Activated CD4-positive, alpha-beta T cell treated with anti-CD3 and anti-CD28 coated beads for 36 hours (primary cell): ENCODE measurements at regions of chr11 and their contacts with region 1.

Region 1: GRCh38 chr11:48055292-48056132 is 75.2 kb downstream of the PTPRJ start:
- DNase-seq: peak; percentile 80
- ATAC-seq: peak; percentile 93
- H3K4me3 Mint-ChIP-seq: peak overlapping the region; percentile 55
- H3K27ac Mint-ChIP-seq: peak overlapping the region; percentile 89
- H3K4me1 Mint-ChIP-seq: peaks cover 84% of the 10 kb centered on the region
- H3K27me3 Mint-ChIP-seq: no peaks in the 10 kb centered on the region

Region 2: GRCh38 chr11:47980245-47981049 is 75.1 kb before region 1 on chr11 and contains the start of gene PTPRJ:
- CTCF ChIA-PET with region 1: interaction called, 3 read pairs
- POLR2A ChIA-PET with region 1: interaction called, 5 read pairs
- intact Hi-C with region 1: loop called (anchors 1 to 2 kb)
- DNase-seq: peak; percentile 73
- ATAC-seq: peak; percentile 59
- H3K4me3 Mint-ChIP-seq: peak within 1 kb of the TSS; percentile 93
- H3K27ac Mint-ChIP-seq: peak within 1 kb of the TSS; percentile 20
- H3K4me1 Mint-ChIP-seq: peaks cover 30% of the 10 kb centered on the region
- H3K27me3 Mint-ChIP-seq: peaks cover 5% of the 10 kb centered on the region
- total RNA-seq, gene PTPRJ: 20.8 to 21.3 TPM

Region 3: DNA sequence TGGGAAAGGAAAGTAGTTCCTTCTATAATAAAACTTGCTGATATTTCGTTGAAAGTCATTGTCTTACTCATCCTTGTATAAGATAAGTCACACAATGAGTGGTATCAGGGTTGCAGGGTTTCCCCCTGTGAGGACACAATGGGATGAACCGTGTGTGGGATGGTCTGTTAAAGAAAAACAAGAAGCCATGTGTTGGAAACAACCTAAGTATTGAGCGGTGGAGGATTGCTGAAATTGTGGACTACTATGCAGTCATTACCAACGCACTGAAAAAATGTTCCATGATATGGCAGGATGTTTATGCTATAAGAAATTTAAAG is 46.6 kb before region 1 on chr11:
- CTCF ChIA-PET with region 1: interaction called, 9 read pairs
- POLR2A ChIA-PET with region 1: interaction called, 14 read pairs
- intact Hi-C with region 1: loop called (anchors 1 kb)
- DNase-seq: peak; percentile 87
- ATAC-seq: peak; percentile 48
- H3K4me3 Mint-ChIP-seq: peak overlapping the region; percentile 37
- H3K27ac Mint-ChIP-seq: peak overlapping the region; percentile 82
- H3K4me1 Mint-ChIP-seq: peaks cover 91% of the 10 kb centered on the region
- H3K27me3 Mint-ChIP-seq: no peaks in the 10 kb centered on the region

Region 4: DNA sequence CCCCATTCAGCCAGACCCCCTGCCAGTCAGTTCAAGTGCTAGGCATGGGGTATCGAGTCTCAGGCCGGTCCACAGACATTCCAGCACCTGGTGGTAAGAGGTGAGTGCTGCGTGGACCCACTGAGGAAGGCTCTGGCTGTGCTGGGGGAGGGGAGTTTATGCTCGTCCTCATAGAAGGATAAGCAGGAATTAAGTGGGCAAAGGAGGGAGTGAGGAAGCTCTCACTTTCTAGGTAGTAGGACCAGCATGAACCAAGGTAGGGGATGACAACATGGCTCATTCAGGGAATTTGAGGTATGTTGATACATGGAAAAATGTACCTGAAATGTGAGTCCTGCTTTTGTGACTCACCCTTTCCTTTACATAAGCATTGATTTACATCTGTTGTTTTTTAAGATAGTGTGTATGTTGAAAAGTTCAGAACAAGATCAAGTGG is 41.5 kb after region 1 on chr11:
- CTCF ChIA-PET with region 1: interaction called, 6 read pairs
- POLR2A ChIA-PET with region 1: interaction called, 3 read pairs
- intact Hi-C with region 1: loop called in 1 of 2 experiments (anchors 2 kb)
- DNase-seq: no peak
- ATAC-seq: peak; percentile 47
- H3K4me3 Mint-ChIP-seq: no peak overlapping the region
- H3K27ac Mint-ChIP-seq: peak overlapping the region; percentile 79
- H3K4me1 Mint-ChIP-seq: peaks cover 65% of the 10 kb centered on the region
- H3K27me3 Mint-ChIP-seq: no peaks in the 10 kb centered on the region

Region 5: DNA sequence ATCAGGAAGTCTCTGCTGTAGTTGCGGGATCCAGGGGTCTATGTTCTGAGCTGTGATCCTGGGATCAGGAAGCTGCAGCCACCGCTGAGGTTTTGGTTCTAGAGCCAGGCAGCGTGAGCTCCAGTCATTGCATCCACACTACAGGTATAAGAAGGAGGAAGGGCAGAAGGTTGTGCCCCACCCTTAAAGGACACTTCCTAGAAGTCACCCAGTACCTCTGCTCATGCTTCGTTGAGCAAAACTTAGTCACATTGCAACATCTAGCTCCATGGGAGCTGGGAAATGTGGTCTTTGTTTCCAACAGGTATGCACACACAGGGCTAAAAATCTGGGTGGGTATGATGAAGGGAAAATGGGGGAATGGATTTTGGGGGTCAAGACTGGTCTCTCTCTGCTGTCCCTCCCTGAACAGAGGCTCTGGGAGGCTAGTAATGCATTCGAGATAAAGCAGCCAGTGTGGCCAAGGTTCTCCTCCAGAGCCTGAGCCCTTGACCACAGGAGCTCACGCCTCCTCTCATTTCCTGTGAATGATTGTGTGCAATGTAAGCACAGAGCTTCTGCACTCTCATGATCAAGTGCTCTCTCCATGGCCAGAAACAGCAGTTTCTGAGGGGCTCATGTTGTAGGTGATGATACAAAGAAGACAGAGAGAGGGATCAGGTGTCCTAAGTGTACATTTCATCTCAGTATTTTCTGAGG is 74.3 kb after region 1 on chr11:
- CTCF ChIA-PET with region 1: no interaction called
- POLR2A ChIA-PET with region 1: no interaction called
- intact Hi-C with region 1: no loop called
- DNase-seq: no peak
- ATAC-seq: no peak
- H3K4me3 Mint-ChIP-seq: no peak overlapping the region
- H3K27ac Mint-ChIP-seq: no peak overlapping the region
- H3K4me1 Mint-ChIP-seq: no peaks in the 10 kb centered on the region
- H3K27me3 Mint-ChIP-seq: no peaks in the 10 kb centered on the region